MCF 10A (cell line): ENCODE measurements at regions of chr10 and their contacts with region 1.

Region 1: DNA sequence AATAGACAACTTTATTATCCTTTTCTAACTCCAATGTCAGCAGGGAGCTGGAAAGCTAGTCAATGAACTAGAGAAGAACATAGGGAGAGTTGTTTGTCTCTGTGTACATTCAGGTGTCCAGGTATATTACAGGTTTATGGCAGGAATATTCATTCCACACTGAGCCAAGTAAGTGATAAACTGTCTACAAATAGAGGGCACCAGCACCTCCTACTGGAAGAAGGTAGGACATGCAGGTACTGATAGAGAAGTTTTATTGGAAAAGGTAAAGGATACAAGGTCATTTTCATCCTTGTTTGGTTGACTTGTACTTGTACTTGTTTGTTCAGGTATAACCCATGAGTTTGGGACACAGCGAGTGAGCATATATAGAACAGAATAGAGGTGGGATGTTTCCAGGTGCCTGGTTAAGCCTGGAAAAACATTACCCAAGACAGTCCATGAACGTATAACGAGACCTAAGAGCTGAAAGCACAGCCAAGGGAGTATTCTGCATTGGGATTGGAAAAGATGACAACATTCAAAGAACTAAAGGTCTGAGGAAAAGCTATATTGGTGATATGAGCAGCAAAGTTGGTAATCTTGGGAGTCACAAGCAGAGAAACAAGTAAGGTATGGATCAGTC is 61.4 kb upstream of the PPP1R3C start:
- DNase-seq: peak; percentile 83
- H3K4me3 Mint-ChIP-seq: no peak overlapping the region
- H3K27ac Mint-ChIP-seq: no peak overlapping the region
- H3K4me1 Mint-ChIP-seq: peaks cover 19% of the 10 kb centered on the region
- H3K27me3 Mint-ChIP-seq: peaks cover 25% of the 10 kb centered on the region
- CTCF ChIP-seq: peak; percentile 79

Region 2: GRCh38 chr10:91389636-91390512 is 304.4 kb before region 1 on chr10:
- CTCF ChIA-PET with region 1: interaction called, 3 read pairs
- POLR2A ChIA-PET with region 1: no interaction called
- intact Hi-C with region 1: loop called (anchors 5 kb)
- DNase-seq: peak; percentile 77
- H3K4me3 Mint-ChIP-seq: no peak overlapping the region
- H3K27ac Mint-ChIP-seq: no peak overlapping the region
- H3K4me1 Mint-ChIP-seq: no peaks in the 10 kb centered on the region
- H3K27me3 Mint-ChIP-seq: peaks cover 42% of the 10 kb centered on the region
- CTCF ChIP-seq: peak; percentile 60

Region 3: DNA sequence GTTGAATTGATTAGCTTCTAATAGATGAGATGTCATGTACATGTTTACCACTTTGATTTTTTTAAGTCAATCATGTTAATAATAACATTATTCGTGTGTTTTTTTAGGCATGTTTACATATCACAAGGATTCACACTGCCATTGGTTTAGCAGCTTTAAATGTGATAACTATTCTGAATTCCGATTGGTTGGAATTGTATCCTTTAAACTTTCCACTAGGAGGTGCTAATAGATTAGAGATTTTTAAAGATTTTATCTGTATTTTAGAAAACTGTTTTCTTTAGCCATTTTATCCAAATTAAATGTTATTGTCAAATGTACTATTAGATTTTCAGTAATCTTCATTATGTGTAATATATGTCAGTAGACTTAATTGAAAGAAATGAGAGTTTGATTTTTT is 201.0 kb before region 1 on chr10:
- CTCF ChIA-PET with region 1: interaction called, 35 read pairs
- POLR2A ChIA-PET with region 1: no interaction called
- intact Hi-C with region 1: loop called (anchors 1 kb)
- DNase-seq: peak; percentile 43
- H3K4me3 Mint-ChIP-seq: no peak overlapping the region
- H3K27ac Mint-ChIP-seq: no peak overlapping the region
- H3K4me1 Mint-ChIP-seq: no peaks in the 10 kb centered on the region
- H3K27me3 Mint-ChIP-seq: no peaks in the 10 kb centered on the region
- CTCF ChIP-seq: peak; percentile 36

Region 4: DNA sequence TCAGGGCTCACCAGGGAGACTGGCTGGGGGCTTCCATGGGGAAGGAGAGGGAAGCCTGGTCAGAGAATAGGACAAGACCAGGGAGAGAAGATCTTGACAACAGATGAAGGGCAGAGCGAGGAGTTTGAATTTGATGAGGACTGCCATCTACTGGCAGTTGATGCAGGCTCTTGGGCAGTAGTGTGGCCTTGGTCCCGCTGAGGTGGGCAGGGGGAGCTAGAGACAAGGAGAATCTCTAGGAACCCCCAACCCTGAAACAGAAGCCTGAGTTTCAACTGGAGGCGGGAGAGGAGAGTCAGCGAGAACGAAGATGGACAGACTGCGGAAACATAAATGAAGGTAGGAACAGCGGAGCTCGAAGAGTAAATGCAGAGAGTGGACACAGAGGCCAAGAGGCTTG is 142.4 kb before region 1 on chr10:
- CTCF ChIA-PET with region 1: no interaction called
- POLR2A ChIA-PET with region 1: no interaction called
- intact Hi-C with region 1: loop called (anchors 1 kb)
- DNase-seq: peak; percentile 45
- H3K4me3 Mint-ChIP-seq: no peak overlapping the region
- H3K27ac Mint-ChIP-seq: no peak overlapping the region
- H3K4me1 Mint-ChIP-seq: peaks cover 17% of the 10 kb centered on the region
- H3K27me3 Mint-ChIP-seq: no peaks in the 10 kb centered on the region
- CTCF ChIP-seq: peak; percentile 35

Region 5: DNA sequence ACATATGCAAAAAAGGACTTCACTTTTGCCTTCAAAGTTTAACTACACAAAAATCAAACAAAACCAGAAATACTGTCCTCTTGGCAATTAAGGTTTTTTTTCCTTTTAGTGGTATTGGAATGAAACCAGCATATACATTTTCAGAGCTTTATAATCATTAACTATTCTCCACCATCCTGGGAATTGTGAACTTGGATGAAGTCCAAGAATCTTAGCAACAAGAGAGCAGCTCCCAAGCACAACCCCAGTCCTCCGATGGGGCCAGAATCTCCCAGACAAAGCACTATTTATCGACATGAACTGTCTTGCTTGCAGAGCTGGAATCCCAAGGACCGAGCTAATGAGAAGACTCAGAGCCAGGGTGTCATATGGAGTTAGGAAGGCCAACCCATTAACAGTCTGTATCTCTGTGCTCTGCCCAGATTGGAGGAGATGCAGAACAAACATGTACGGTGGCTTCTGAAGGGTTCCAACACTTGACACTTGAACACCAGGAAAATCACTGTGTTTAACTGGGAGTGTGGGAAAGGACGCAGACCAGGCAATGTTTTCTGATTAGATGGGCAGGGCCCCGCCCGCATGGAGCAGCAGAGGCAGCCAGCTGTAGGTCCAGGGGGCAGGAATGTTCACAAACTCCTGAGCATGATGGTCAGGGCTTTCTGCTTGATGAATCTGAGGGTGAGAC is 96.9 kb before region 1 on chr10:
- CTCF ChIA-PET with region 1: no interaction called
- POLR2A ChIA-PET with region 1: no interaction called
- intact Hi-C with region 1: no loop called
- DNase-seq: peak; percentile 39
- H3K4me3 Mint-ChIP-seq: no peak overlapping the region
- H3K27ac Mint-ChIP-seq: peak overlapping the region; percentile 76
- H3K4me1 Mint-ChIP-seq: peaks cover 26% of the 10 kb centered on the region
- H3K27me3 Mint-ChIP-seq: no peaks in the 10 kb centered on the region
- CTCF ChIP-seq: no peak

Region 6: GRCh38 chr10:91643700-91644099 is 50.6 kb before region 1 on chr10:
- CTCF ChIA-PET with region 1: interaction called, 19 read pairs
- POLR2A ChIA-PET with region 1: no interaction called
- intact Hi-C with region 1: loop called (anchors 1 kb)
- DNase-seq: peak; percentile 55
- H3K4me3 Mint-ChIP-seq: no peak overlapping the region
- H3K27ac Mint-ChIP-seq: no peak overlapping the region
- H3K4me1 Mint-ChIP-seq: peaks cover 18% of the 10 kb centered on the region
- H3K27me3 Mint-ChIP-seq: no peaks in the 10 kb centered on the region
- CTCF ChIP-seq: peak; percentile 24

Region 7: GRCh38 chr10:91652364-91652763 is 41.9 kb before region 1 on chr10:
- CTCF ChIA-PET with region 1: interaction called, 10 read pairs
- POLR2A ChIA-PET with region 1: interaction called, 7 read pairs
- intact Hi-C with region 1: no loop called
- DNase-seq: peak; percentile 88
- H3K4me3 Mint-ChIP-seq: no peak overlapping the region
- H3K27ac Mint-ChIP-seq: peak overlapping the region; percentile 68
- H3K4me1 Mint-ChIP-seq: peaks cover 25% of the 10 kb centered on the region
- H3K27me3 Mint-ChIP-seq: no peaks in the 10 kb centered on the region
- CTCF ChIP-seq: no peak

Region 8: GRCh38 chr10:91724933-91725332 is 30.7 kb after region 1 on chr10:
- CTCF ChIA-PET with region 1: interaction called, 10 read pairs
- POLR2A ChIA-PET with region 1: no interaction called
- intact Hi-C with region 1: no loop called
- DNase-seq: no peak
- H3K4me3 Mint-ChIP-seq: no peak overlapping the region
- H3K27ac Mint-ChIP-seq: no peak overlapping the region
- H3K4me1 Mint-ChIP-seq: no peaks in the 10 kb centered on the region
- H3K27me3 Mint-ChIP-seq: peaks cover 24% of the 10 kb centered on the region
- CTCF ChIP-seq: no peak

Region 9: GRCh38 chr10:92052088-92052487 is 357.8 kb after region 1 on chr10:
- CTCF ChIA-PET with region 1: no interaction called
- POLR2A ChIA-PET with region 1: no interaction called
- intact Hi-C with region 1: no loop called
- DNase-seq: no peak
- H3K4me3 Mint-ChIP-seq: no peak overlapping the region
- H3K27ac Mint-ChIP-seq: no peak overlapping the region
- H3K4me1 Mint-ChIP-seq: no peaks in the 10 kb centered on the region
- H3K27me3 Mint-ChIP-seq: no peaks in the 10 kb centered on the region
- CTCF ChIP-seq: no peak